Gastrocnemius medialis (tissue), 4 donors: ENCODE measurements at regions of chr3 and their contacts with region 1.

Region 1: GRCh38 chr3:69013253-69014021 is at the start of gene EOGT:
- DNase-seq: peak; percentile 78 to 91
- ATAC-seq: peak; percentile 89 to 91
- H3K4me3 ChIP-seq: peak within 1 kb of the TSS; percentile 73 to 88 (median 80)
- H3K27ac ChIP-seq: peak within 1 kb of the TSS; percentile 90 to 100 (median 98)
- H3K4me1 ChIP-seq: peaks cover 40% of the 10 kb centered on the region in 2 donors
- H3K27me3 ChIP-seq: no peaks in the 10 kb centered on the region
- CTCF ChIP-seq: peak; percentile 48 to 63 (median 62)
- POLR2A ChIP-seq: peak; percentile 46 to 74
- total RNA-seq, gene EOGT: 13.3 to 25.2 (median 20.1) TPM

Region 2: DNA sequence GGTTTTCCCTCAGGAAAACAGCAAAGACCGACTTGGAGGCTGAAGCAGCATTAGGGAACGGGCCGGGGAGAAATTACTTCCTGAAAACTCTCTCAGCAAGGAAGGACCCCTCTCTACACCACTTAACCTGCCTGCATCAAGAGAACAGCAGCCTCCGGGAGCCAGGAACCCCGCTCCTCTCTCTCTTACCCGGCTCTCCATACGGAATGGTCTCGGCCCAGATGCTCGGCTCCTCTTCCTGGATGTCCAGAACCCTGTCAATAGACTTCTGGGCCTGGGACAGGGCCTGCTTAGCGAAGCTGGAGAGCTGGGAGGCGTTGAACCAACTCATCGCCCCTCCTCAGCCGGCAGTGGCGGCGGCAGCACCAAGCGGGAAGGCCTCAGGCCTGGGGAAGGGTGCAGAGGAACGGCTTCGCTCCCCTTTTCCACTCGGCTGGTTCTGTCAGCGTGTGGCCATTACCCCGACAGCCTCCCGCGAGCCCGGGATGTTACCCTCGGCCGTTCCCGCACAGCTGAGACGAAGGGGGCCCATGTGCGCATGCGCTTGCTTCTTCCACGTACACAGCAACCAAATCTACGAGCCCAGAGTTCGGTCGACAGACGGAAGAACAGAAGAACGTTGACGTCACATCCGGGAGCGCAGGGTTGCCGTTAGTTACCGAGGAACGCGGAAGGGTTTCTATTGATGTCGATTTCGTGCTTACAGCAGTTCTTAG is 38.5 kb after region 1 on chr3 and contains the start of gene TMF1:
- in situ Hi-C with region 1: no loop called
- intact Hi-C with region 1: loop called (anchors 1 kb)
- DNase-seq: peak; percentile 97
- ATAC-seq: peak; percentile 99
- H3K4me3 ChIP-seq: peak within 1 kb of the TSS; percentile 81 to 97 (median 85)
- H3K27ac ChIP-seq: peak within 1 kb of the TSS; percentile 90 to 96 (median 94)
- H3K4me1 ChIP-seq: peaks cover 10 to 16% of the 10 kb centered on the region in 2 donors
- H3K27me3 ChIP-seq: no peaks in the 10 kb centered on the region
- CTCF ChIP-seq: no peak
- POLR2A ChIP-seq: peak; percentile 71 to 76
- total RNA-seq, gene TMF1: 27.0 to 49.6 (median 33.5) TPM

Region 3: DNA sequence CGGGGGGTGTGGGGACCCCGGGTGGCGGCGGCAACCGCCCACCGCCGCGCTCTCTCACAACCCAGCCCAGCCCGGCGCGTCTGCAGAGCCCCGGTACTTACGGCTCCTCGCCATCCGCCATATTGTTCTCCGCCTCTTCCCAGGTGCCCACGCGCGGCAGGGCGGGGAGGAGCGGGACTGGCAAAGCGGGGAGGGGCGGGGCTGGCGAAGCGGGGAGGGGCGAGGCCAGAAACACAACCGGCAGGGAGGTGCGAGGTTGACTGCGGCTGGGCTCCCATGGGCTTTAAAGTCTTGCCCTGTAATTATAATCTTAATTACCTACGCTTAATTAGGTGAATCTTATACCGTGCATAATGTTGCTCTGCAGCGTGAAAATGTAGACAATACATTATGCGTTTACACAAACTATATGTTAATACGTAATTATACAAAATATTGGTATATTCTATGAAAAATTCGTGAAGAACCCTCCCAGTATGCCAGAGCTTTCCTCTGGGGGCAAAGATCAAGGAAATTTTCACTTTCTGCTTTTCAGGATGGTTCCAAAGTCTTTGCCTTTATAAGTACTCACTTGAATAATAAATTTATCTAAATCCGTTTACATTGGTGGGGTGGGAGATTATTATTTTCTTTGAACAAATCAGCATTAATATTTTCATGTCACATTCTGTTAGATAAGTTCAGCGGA is 66.9 kb after region 1 on chr3 and contains the start of gene UBA3:
- in situ Hi-C with region 1: no loop called
- intact Hi-C with region 1: loop called (anchors 1 kb)
- DNase-seq: peak; percentile 86 to 90
- ATAC-seq: peak; percentile 45 to 52
- H3K4me3 ChIP-seq: peak within 1 kb of the TSS; percentile 78 to 89 (median 82)
- H3K27ac ChIP-seq: peak within 1 kb of the TSS; percentile 95 to 99 (median 97)
- H3K4me1 ChIP-seq: peaks cover 58 to 61% of the 10 kb centered on the region in 2 donors
- H3K27me3 ChIP-seq: no peaks in the 10 kb centered on the region
- CTCF ChIP-seq: no peak
- POLR2A ChIP-seq: peak in 1 of 2 donors; percentile 25
- total RNA-seq, gene UBA3: 29.3 to 42.2 (median 36.0) TPM

Region 4: DNA sequence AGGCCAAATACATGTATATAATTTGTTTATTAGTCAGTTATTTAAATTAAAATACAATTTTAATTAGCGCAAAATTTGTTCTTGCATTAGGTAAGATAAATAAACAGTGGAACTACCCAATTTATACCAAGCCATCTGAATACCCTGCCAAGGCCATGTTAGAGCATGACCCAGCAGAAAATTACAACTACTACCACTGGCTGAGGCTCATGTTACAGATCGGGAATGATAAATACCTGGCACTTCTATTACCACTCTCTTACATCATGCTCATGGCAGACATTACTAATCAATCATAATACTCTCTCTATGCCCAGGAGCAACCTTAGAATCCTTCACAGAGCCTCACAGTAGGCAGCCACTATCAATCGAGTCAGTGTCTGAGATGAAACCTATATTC is 130.2 kb after region 1 on chr3:
- in situ Hi-C with region 1: no loop called
- intact Hi-C with region 1: loop called (anchors 5 kb)
- DNase-seq: no peak
- ATAC-seq: peak; percentile 84 to 89
- H3K4me3 ChIP-seq: no peak overlapping the region
- H3K27ac ChIP-seq: peak overlapping the region; percentile 72 to 81 (median 76)
- H3K4me1 ChIP-seq: peaks cover 36% of the 10 kb centered on the region in 2 donors
- H3K27me3 ChIP-seq: no peaks in the 10 kb centered on the region
- CTCF ChIP-seq: no peak
- POLR2A ChIP-seq: no peak